ENCODE measurements at regions of chr12 and their contacts with region 1.

Region 1: GRCh38 chr12:127108360-127109215 is 1158.4 kb upstream of the TMEM132C start:
- DNase-seq: peak; percentile 40 to 43
- ATAC-seq: peak in 7 of 8 donors; percentile 42 to 79 (median 71)
- H3K4me3 ChIP-seq: no peak overlapping the region
- H3K27ac ChIP-seq: no peak overlapping the region
- H3K4me1 ChIP-seq: no peaks in the 10 kb centered on the region
- H3K27me3 ChIP-seq: peaks cover 0 to 15% (median 11%) of the 10 kb centered on the region in 7 donors
- CTCF ChIP-seq: peak; percentile 52 to 80 (median 72)

Region 2: DNA sequence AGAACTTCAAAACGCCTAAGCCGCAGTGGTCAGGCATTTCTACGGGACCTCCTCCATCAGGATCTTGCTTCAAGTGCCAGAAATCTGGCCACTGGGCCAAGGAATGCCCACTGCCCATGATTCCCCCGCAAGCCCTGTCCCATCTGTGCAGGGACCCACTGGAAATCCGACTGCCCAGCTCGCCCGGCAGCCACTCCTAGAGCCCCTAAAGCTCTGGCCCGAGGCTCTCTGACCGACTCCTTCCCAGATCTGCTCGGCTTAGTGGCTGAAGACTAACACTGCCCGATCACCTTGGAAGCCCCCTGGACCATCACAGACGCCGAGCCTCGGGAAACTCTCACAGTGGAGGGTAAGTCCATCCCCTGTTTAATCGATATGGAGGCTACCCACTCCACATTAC is 45.4 kb after region 1 on chr12:
- intact Hi-C with region 1: no loop called
- DNase-seq: no peak
- ATAC-seq: no peak
- H3K4me3 ChIP-seq: no peak overlapping the region
- H3K27ac ChIP-seq: no peak overlapping the region
- H3K4me1 ChIP-seq: no peaks in the 10 kb centered on the region
- H3K27me3 ChIP-seq: peaks cover 0 to 3% (median 0%) of the 10 kb centered on the region in 7 donors
- CTCF ChIP-seq: no peak

Region 3: DNA sequence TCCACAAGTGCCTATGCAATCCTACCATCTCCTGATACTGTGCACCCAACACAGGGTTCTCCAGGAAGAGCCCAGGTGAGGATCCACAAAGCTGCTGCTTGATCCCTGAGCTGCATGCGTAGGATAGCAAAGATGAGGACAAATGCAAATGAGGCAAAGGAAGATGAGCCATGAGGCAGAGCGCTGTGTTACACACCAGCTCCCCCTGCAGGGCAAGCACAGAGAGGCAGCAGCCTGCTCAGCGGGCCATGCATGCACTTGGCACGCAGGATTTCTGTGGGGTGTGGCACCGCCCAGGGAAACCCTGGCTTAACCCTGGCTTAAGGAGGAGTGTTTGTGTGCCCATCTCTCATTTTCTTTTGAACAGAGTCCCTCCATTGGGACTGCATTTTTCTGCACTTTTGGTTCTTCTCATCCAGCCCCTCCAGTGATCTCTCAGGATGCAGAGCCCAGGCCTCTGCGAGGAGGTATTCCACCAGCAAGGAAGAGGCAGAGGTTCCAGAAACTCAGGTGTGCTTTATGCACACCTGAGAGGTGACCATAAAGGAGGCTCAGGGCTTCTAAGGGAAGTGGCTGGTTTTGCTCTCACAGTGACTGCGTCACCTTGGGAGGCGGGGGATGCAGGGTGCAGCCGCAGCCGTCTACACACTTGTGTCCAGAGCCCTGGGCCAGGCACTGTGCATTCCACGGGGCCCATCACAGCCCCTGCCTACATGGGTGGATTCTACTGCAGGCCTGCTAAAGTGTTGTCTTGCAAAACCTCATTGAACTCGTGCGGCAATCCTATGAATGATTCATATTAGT is 185.1 kb after region 1 on chr12:
- intact Hi-C with region 1: loop called in 8 of 10 experiments (anchors 1 to 10 kb)
- DNase-seq: peak in 1 of 2 donors; percentile 40
- ATAC-seq: peak in 5 of 8 donors; percentile 16 to 69 (median 50)
- H3K4me3 ChIP-seq: no peak overlapping the region
- H3K27ac ChIP-seq: no peak overlapping the region
- H3K4me1 ChIP-seq: no peaks in the 10 kb centered on the region
- H3K27me3 ChIP-seq: peaks cover 0 to 16% (median 7%) of the 10 kb centered on the region in 7 donors
- CTCF ChIP-seq: peak; percentile 30 to 76 (median 64)

Region 4: DNA sequence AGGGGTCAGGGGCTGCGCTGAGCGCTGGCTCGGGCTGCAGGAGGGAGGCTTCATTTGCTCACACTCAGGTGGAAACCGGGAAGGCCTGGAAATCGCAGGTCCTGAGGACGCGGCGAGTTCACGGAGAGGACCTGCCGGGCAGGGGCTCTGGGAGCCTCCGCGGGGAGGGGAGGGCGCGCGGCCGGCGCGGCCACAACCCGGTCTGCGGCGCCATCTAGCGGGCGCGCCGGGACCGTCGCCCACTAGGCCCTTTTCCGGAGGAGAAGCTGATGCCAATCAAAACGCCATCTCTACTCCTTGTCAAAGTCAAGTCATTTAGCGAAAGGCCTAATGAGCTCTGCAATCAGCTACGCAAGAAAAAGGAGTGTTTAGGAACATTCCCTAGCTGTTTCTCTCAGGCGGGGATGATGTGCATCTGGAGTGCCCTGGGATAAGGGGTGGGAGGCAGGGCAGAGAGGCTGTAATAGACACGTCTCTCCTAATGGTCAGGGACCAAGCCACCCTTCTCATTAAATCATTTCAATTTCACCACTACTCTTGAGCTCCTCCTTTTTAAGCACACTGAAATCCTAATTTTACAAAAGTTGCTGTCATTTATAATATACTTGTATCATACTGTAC is 272.6 kb after region 1 on chr12:
- intact Hi-C with region 1: loop called (anchors 1 to 10 kb)
- DNase-seq: peak; percentile 6 to 30
- ATAC-seq: peak in 5 of 8 donors; percentile 42 to 76 (median 54)
- H3K4me3 ChIP-seq: peak overlapping the region in 3 of 10 donors; percentile 19 to 24 (median 21)
- H3K27ac ChIP-seq: no peak overlapping the region
- H3K4me1 ChIP-seq: peaks cover 0 to 6% (median 0%) of the 10 kb centered on the region in 9 donors
- H3K27me3 ChIP-seq: peaks cover 0 to 23% (median 12%) of the 10 kb centered on the region in 7 donors
- CTCF ChIP-seq: peak; percentile 70 to 88 (median 84)

Region 5: DNA sequence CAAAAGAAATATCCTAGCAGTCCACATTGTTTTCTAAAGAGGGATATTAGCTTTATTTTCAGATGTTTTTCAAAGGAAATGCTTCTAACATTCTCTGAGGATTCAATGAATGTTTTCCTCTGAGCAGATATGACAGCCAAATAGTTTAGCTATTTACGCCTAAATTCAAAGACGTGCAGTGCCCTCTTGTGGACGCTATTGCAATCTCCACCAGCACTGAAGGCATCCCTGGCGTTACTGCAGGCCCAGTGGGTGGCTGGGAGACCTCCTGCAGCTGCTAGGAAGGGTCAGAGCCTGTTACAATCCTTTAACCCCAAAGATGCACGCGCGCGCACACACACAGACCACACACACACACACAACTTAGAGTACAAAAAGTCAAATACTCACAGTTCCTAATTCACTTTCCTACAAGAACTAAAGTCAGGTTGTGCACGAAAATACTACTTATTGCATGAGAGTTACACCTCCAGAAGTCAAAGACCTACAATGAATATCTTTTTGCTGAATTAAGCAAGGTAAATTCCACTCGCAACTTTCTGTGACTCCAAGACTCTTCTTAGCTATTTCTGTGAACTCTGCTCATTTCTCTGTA is 569.0 kb after region 1 on chr12:
- intact Hi-C with region 1: loop called in 3 of 10 experiments (anchors 5 to 10 kb)
- DNase-seq: peak; percentile 32 to 62
- ATAC-seq: peak in 7 of 8 donors; percentile 47 to 84 (median 74)
- H3K4me3 ChIP-seq: no peak overlapping the region
- H3K27ac ChIP-seq: no peak overlapping the region
- H3K4me1 ChIP-seq: peaks cover 0 to 8% (median 0%) of the 10 kb centered on the region in 9 donors
- H3K27me3 ChIP-seq: peaks cover 0 to 3% (median 0%) of the 10 kb centered on the region in 7 donors
- CTCF ChIP-seq: peak; percentile 52 to 80 (median 70)

Region 6: GRCh38 chr12:128069359-128069997 is 960.9 kb after region 1 on chr12:
- intact Hi-C with region 1: loop called in 1 of 10 experiments (anchors 10 kb)
- DNase-seq: no peak
- ATAC-seq: no peak
- H3K4me3 ChIP-seq: no peak overlapping the region
- H3K27ac ChIP-seq: no peak overlapping the region
- H3K4me1 ChIP-seq: no peaks in the 10 kb centered on the region
- H3K27me3 ChIP-seq: peaks cover 0 to 6% (median 0%) of the 10 kb centered on the region in 7 donors
- CTCF ChIP-seq: peak; percentile 33 to 74 (median 62)